SK-N-SH (cell line): ENCODE measurements at regions of chr17 and their contacts with region 1.

Region 1: DNA sequence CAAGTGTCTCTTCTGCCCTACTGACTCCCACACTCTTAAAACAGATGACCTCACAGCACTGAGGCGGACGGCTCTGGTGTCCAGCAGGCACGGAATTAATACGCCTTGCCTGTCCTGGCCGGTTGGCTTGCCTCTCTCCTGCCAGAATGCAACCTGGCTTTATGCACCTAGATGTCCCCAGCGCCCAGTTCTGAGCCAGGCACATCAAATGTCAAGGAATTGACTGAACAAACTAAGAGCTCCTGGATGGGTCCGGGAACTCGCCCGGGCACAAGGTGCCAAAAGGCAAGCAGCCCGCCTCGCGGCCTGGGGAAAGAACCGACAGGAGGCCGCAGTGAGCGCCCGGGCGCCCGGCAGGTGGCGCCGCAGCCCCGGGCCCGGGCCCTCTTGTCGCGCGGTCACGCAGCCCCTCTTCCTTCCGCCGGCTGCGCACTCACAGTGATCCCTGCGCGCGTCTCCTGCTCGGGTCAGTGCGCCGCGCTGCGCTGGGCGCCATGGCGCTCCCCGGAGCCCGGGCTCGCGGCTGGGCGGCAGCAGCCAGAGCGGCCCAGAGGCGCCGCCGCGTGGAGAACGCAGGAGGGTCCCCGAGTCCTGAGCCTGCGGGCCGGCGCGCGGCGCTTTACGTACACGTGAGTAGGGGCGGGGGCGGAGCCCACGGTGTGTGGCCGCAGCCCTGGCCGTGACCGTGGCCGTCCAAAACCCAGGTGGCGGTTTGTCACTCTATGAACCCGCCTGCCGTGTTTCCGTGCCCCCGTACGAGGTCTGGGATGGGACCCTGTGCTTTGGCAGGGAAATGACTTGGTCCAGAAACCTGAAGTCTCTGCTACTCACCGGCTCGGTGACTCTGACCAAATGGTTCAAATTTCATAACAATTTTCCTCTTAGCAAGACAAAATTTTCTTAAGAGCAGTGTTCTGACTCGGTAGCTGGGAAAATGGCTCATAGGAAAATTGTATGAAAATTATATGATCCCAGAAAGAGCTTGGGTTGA is at the start of gene RSAD1:
- DNase-seq: peak; percentile 98
- H3K4me3 ChIP-seq: peak within 1 kb of the TSS; percentile 80 to 90
- H3K27ac ChIP-seq: peak within 1 kb of the TSS; percentile 79 to 88
- H3K4me1 ChIP-seq: peaks cover 10 to 17% of the 10 kb centered on the region in 2 experiments; a peak in 2 of 4 replicates
- H3K27me3 ChIP-seq: no peaks in the 10 kb centered on the region
- CTCF ChIP-seq: peak; percentile 94
- EP300 ChIP-seq: peak; percentile 20 to 32; a peak in 2 of 4 replicates
- RAD21 ChIP-seq: peak; percentile 53
- polyA plus RNA-seq, gene RSAD1: 44.7 and 58.9 TPM in 2 replicates

Region 2: DNA sequence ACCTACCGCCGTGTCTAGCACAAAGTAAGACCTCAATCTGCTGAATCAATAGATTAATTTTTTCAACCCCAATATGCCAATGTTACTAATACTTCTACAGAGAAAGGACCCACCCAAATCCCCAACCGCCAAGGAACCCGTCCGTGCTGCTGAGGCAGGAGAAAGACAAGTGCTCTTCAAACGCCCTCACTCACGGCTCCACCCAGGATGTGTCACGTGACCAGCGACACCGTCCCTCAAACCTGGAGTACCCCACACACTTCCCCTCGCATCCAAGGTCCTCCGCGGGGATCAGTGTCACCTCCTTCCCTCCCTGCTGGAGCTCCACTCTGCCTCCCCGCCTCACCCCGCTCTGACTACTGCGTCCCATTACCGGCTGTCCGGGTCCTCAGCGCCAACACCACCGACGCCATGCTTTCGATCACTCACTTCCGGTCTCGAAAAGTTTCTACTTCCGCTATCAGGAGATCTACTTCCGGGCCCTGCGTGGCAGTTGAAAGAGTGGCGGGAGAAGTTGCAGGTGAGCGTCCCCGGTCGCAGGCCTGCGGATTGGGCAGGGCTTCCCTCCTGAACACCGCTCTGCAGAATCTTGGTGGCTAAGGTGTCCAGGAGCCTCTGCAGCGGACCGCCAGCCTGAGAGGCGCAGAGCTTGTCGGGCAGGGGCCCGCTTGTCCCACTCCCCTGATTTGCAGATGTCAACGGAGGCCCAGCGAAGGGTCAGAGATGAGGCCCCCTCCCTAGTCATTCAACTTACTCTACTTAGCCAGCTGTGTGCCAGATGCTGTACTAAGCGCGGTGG is 105.7 kb before region 1 on chr17 and contains the starts of genes EME1 and MRPL27:
- CTCF ChIA-PET with region 1: interaction called, 10 read pairs
- POLR2A ChIA-PET with region 1: no interaction called
- DNase-seq: peak; percentile 92
- H3K4me3 ChIP-seq: peak within 1 kb of the TSS; percentile 81 to 94
- H3K27ac ChIP-seq: peak within 1 kb of the TSS; percentile 93 to 96
- H3K4me1 ChIP-seq: peaks cover 0 to 27% of the 10 kb centered on the region in 2 experiments; a peak in 2 of 4 replicates
- H3K27me3 ChIP-seq: no peaks in the 10 kb centered on the region
- CTCF ChIP-seq: no peak
- EP300 ChIP-seq: no peak
- RAD21 ChIP-seq: no peak
- polyA plus RNA-seq, gene EME1: 16.9 and 21.5 TPM in 2 replicates
- polyA plus RNA-seq, gene MRPL27: 266 and 337 TPM in 2 replicates

Region 3: GRCh38 chr17:50431233-50431632 is 47.5 kb before region 1 on chr17:
- CTCF ChIA-PET with region 1: interaction called, 11 read pairs
- POLR2A ChIA-PET with region 1: no interaction called
- DNase-seq: no peak
- H3K4me3 ChIP-seq: no peak overlapping the region
- H3K27ac ChIP-seq: no peak overlapping the region
- H3K4me1 ChIP-seq: peaks cover 0 to 13% of the 10 kb centered on the region in 2 experiments; a peak in 1 of 4 replicates
- H3K27me3 ChIP-seq: no peaks in the 10 kb centered on the region
- CTCF ChIP-seq: no peak
- EP300 ChIP-seq: no peak
- RAD21 ChIP-seq: no peak

Region 4: DNA sequence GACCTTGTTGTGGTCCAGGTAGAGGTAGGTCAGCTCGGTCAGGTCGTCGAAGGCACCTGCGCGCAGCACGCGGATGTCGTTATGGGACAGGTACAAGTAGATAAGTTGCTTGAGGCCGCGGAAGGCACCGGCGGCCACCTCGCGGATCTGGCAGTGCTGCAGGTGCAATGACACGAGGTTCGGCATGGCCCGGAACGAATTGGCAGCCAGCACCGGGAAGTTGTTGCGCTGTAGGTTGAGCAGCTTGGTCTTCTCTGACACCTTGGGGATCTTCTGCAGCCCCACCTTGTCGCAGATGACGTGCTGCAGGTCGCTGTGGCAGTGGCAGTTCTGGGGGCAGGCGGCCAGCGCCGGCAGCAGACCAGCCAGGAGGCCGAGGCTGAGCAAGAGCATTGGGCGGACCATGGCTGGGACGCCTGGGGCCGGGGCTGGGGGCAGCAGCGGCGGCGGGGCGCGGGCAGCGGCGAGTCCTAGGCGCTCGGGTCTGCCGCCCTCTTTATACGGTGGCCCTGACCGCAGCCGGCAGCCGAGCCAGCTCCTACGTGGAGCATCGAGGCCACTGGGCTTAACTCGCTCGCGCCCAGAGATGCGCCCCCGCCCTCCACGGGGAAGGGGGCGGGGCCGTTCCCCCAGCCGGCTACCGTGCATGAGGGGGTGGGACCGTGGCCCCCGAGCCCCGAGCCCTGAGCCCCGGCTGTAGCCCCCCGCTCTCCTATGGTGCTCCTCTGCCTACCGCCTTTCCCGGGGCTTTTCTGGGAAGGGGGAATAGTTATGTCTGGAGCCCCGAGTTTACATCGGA is 10.1 kb before region 1 on chr17 and contains the start of gene CHAD:
- CTCF ChIA-PET with region 1: interaction called, 53 read pairs
- POLR2A ChIA-PET with region 1: no interaction called
- DNase-seq: peak; percentile 87
- H3K4me3 ChIP-seq: peak within 1 kb of the TSS in 1 of 2 experiments; percentile 41; a peak in 2 of 4 replicates
- H3K27ac ChIP-seq: no peak within 1 kb of the TSS
- H3K4me1 ChIP-seq: peaks cover 0 to 17% of the 10 kb centered on the region in 2 experiments; a peak in 1 of 4 replicates
- H3K27me3 ChIP-seq: no peaks in the 10 kb centered on the region
- CTCF ChIP-seq: no peak
- EP300 ChIP-seq: no peak
- RAD21 ChIP-seq: no peak
- polyA plus RNA-seq, gene CHAD: not detected in 2 replicates

Region 5: GRCh38 chr17:50518384-50519230 is 39.9 kb after region 1 on chr17:
- CTCF ChIA-PET with region 1: interaction called, 13 read pairs
- POLR2A ChIA-PET with region 1: no interaction called
- DNase-seq: no peak
- H3K4me3 ChIP-seq: no peak overlapping the region
- H3K27ac ChIP-seq: no peak overlapping the region
- H3K4me1 ChIP-seq: peaks cover 0 to 7% of the 10 kb centered on the region in 2 experiments; a peak in 1 of 4 replicates
- H3K27me3 ChIP-seq: no peaks in the 10 kb centered on the region
- CTCF ChIP-seq: no peak
- EP300 ChIP-seq: no peak
- RAD21 ChIP-seq: no peak

Region 6: GRCh38 chr17:50541716-50542688 is 63.3 kb after region 1 on chr17:
- CTCF ChIA-PET with region 1: interaction called, 36 read pairs
- POLR2A ChIA-PET with region 1: no interaction called
- DNase-seq: peak; percentile 100
- H3K4me3 ChIP-seq: peak overlapping the region; percentile 56 to 61
- H3K27ac ChIP-seq: peak overlapping the region; percentile 34 to 83
- H3K4me1 ChIP-seq: peaks cover 12 to 22% of the 10 kb centered on the region in 2 experiments; a peak in 3 of 4 replicates
- H3K27me3 ChIP-seq: no peaks in the 10 kb centered on the region
- CTCF ChIP-seq: peak; percentile 46
- EP300 ChIP-seq: no peak
- RAD21 ChIP-seq: no peak